MCF 10A (cell line): ENCODE measurements at regions of chr19 and their contacts with region 1.

Region 1: GRCh38 chr19:46741447-46741846 is 4.4 kb upstream of the FKRP start:
- DNase-seq: no peak
- H3K4me3 Mint-ChIP-seq: no peak overlapping the region
- H3K27ac Mint-ChIP-seq: peak overlapping the region; percentile 83
- H3K4me1 Mint-ChIP-seq: peaks cover 28% of the 10 kb centered on the region
- H3K27me3 Mint-ChIP-seq: no peaks in the 10 kb centered on the region
- CTCF ChIP-seq: no peak

Region 2: GRCh38 chr19:46564701-46565100 is 176.7 kb before region 1 on chr19:
- CTCF ChIA-PET with region 1: no interaction called
- POLR2A ChIA-PET with region 1: no interaction called
- intact Hi-C with region 1: no loop called
- DNase-seq: no peak
- H3K4me3 Mint-ChIP-seq: no peak overlapping the region
- H3K27ac Mint-ChIP-seq: no peak overlapping the region
- H3K4me1 Mint-ChIP-seq: no peaks in the 10 kb centered on the region
- H3K27me3 Mint-ChIP-seq: no peaks in the 10 kb centered on the region
- CTCF ChIP-seq: no peak

Region 3: DNA sequence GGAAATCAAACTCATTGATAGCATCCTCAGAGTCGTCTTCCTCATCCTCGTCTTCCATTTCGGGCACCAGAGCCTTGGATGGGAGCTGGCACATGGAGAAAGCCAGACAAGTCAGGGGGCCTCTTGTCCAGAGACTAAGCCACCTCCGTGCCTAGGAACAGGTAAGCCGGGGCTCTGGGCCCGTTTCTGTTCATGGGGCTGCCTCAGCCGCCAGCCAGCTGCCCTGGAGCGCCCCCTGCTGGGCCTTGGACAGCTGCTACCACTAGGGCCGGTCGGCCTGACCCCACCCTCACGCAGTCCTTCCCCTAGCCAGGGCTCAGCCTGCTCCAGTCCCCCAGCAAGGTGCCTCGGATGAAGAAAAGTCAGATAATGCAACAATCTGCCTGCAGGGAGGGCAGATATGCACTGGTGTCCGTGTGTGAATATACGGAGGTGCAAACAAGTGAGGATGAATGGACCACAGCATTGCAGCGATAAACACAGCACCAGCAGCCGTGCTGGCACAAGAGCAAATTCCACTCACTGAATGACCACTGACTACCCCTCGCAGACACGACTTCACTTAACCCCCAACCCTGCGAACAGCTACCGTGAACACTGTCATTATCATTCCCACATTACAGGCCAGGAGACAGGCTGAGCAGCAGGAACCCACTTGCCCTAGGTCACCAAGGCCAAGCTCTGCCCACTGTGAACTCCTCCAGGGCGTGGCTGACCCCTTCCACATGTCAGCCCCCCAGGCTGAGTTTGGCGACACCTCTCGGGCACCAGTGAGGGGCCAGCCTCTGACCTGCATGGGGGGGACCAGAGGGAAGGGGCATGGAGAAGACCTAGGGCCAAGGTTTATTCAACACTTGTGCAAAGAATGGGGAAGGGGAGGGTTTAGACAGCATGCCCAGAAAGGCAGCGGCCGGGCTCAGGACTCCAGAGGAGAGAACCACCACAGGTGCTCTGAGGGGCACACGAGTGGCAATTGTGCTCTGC is 12.5 kb before region 1 on chr19:
- CTCF ChIA-PET with region 1: interaction called, 19 read pairs
- POLR2A ChIA-PET with region 1: interaction called, 3 read pairs
- intact Hi-C with region 1: no loop called
- DNase-seq: peak; percentile 62
- H3K4me3 Mint-ChIP-seq: no peak overlapping the region
- H3K27ac Mint-ChIP-seq: no peak overlapping the region
- H3K4me1 Mint-ChIP-seq: peaks cover 10% of the 10 kb centered on the region
- H3K27me3 Mint-ChIP-seq: no peaks in the 10 kb centered on the region
- CTCF ChIP-seq: peak; percentile 86

Region 4: GRCh38 chr19:46766569-46767317 is 25.3 kb after region 1 on chr19:
- CTCF ChIA-PET with region 1: no interaction called
- POLR2A ChIA-PET with region 1: no interaction called
- intact Hi-C with region 1: no loop called
- DNase-seq: peak; percentile 62
- H3K4me3 Mint-ChIP-seq: no peak overlapping the region
- H3K27ac Mint-ChIP-seq: no peak overlapping the region
- H3K4me1 Mint-ChIP-seq: no peaks in the 10 kb centered on the region
- H3K27me3 Mint-ChIP-seq: no peaks in the 10 kb centered on the region
- CTCF ChIP-seq: peak; percentile 43